Gastrocnemius medialis (tissue), 4 donors: ENCODE measurements at regions of chr4 and their contacts with region 1.

Region 1: GRCh38 chr4:154551872-154552686 is 1.9 kb upstream of the PLRG1 start:
- DNase-seq: peak; percentile 43 to 66
- ATAC-seq: peak; percentile 59 to 71
- H3K4me3 ChIP-seq: no peak overlapping the region
- H3K27ac ChIP-seq: peak overlapping the region in 1 of 4 donors; percentile 1
- H3K4me1 ChIP-seq: peaks cover 13 to 20% of the 10 kb centered on the region in 2 donors
- H3K27me3 ChIP-seq: no peaks in the 10 kb centered on the region
- CTCF ChIP-seq: peak; percentile 46 to 84 (median 70)
- POLR2A ChIP-seq: no peak

Region 2: GRCh38 chr4:154578919-154579318 is 26.8 kb after region 1 on chr4:
- in situ Hi-C with region 1: no loop called
- intact Hi-C with region 1: no loop called
- DNase-seq: no peak
- ATAC-seq: no peak
- H3K4me3 ChIP-seq: no peak overlapping the region
- H3K27ac ChIP-seq: no peak overlapping the region
- H3K4me1 ChIP-seq: no peaks in the 10 kb centered on the region
- H3K27me3 ChIP-seq: no peaks in the 10 kb centered on the region
- CTCF ChIP-seq: no peak
- POLR2A ChIP-seq: no peak

Region 3: GRCh38 chr4:154626793-154627484 is 74.9 kb after region 1 on chr4:
- in situ Hi-C with region 1: no loop called
- intact Hi-C with region 1: loop called (anchors 5 kb)
- DNase-seq: no peak
- ATAC-seq: no peak
- H3K4me3 ChIP-seq: peak overlapping the region in 3 of 4 donors; percentile 13 to 29 (median 18)
- H3K27ac ChIP-seq: no peak overlapping the region
- H3K4me1 ChIP-seq: peaks cover 0 to 3% of the 10 kb centered on the region in 2 donors
- H3K27me3 ChIP-seq: peaks cover 0 to 4% (median 0%) of the 10 kb centered on the region in 3 donors
- CTCF ChIP-seq: peak in 1 of 5 experiments; percentile 26
- POLR2A ChIP-seq: no peak

Region 4: GRCh38 chr4:155353923-155354540 is 802.0 kb after region 1 on chr4:
- in situ Hi-C with region 1: loop called in 1 of 4 experiments (anchors 25 kb)
- intact Hi-C with region 1: no loop called
- DNase-seq: peak in 1 of 2 donors; percentile 15
- ATAC-seq: no peak
- H3K4me3 ChIP-seq: no peak overlapping the region
- H3K27ac ChIP-seq: no peak overlapping the region
- H3K4me1 ChIP-seq: no peaks in the 10 kb centered on the region
- H3K27me3 ChIP-seq: no peaks in the 10 kb centered on the region
- CTCF ChIP-seq: peak in 1 of 5 experiments; percentile 38
- POLR2A ChIP-seq: no peak

Region 5: DNA sequence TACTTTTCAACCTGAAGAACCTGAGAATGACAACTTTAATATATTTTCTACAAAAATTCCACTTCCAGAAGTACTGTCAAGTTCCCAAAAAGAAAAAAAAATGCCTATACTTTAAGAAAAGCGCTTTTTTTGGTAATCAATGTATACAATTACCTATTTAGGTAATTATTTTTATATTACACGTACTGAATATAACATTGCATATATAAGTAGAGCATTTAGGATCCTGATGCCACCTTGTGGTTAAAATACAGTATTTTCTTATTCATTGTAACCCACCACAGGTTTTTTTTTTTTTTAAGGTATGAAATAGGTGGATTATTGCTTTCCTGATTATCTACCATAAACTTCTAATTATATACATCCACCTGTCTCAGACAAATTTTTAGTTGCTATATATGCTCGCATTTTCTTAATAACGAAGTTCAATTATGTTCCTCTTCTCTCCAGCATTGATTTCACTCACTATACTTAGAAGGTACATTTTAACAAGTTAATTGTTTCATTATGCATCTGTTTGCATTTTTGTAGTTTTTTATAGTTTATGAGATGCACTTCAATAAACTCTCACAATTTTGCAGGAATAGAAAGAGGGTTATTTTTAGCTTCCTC is 819.5 kb after region 1 on chr4:
- in situ Hi-C with region 1: loop called (anchors 5 to 25 kb)
- intact Hi-C with region 1: loop called (anchors 1 kb)
- DNase-seq: no peak
- ATAC-seq: no peak
- H3K4me3 ChIP-seq: no peak overlapping the region
- H3K27ac ChIP-seq: no peak overlapping the region
- H3K4me1 ChIP-seq: peaks cover 4 to 6% of the 10 kb centered on the region in 2 donors
- H3K27me3 ChIP-seq: peaks cover 14 to 19% (median 16%) of the 10 kb centered on the region in 3 donors
- CTCF ChIP-seq: peak in 2 of 5 experiments; percentile 39 to 41
- POLR2A ChIP-seq: no peak

Region 6: DNA sequence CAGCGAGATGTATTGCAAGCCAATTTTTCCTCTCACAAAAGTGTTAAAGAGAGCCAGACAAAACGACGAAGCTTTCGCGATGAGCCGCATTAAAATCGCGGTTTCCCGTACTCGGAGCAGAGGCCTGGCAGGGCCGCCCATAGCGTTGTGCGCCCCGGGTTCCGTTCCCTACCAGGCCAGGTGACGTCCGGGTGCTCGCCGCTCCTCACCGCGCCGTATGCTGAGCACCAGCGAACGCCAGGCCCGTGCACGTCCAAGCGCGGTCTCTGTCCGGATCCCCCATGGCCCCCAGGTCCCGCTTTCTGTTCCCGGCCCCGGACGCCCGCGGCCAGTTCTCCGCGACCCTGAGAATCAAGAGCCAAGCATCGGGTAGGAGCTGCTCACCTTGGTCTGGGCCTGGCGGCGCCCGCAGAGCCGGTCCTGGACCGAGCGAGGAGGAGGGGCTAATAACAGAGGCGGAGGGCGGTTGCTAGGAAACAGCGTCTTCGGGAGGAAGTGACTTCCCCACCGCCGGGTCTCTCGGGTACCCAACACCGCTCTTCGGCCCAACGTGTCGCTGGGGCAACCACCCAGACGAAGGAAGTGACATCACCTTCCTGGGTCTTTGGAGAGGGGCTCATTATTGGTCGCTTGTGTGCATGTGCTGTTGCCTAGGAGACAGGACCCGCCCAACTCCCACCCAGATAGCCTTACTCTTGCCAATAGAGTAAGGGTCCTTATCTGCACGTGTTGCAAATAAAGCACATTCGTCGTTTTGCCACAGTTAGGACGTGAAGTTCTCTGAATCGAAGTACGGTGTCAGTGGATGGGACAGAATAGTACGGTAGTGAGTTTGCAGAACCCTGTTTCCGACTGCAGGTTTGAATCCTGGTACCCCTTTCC is 824.5 kb after region 1 on chr4 and contains the start of gene MAP9:
- in situ Hi-C with region 1: loop called (anchors 5 to 25 kb)
- intact Hi-C with region 1: loop called (anchors 1 kb)
- DNase-seq: peak; percentile 61 to 63
- ATAC-seq: peak; percentile 63 to 79
- H3K4me3 ChIP-seq: peak within 1 kb of the TSS; percentile 56 to 80 (median 58)
- H3K27ac ChIP-seq: no peak within 1 kb of the TSS
- H3K4me1 ChIP-seq: peaks cover 4 to 6% of the 10 kb centered on the region in 2 donors
- H3K27me3 ChIP-seq: peaks cover 18 to 20% (median 19%) of the 10 kb centered on the region in 3 donors
- CTCF ChIP-seq: no peak
- POLR2A ChIP-seq: no peak
- total RNA-seq, gene MAP9: 0.23 to 0.71 (median 0.41) TPM in 3 of 4 donors, not detected in the other